CD4-positive, alpha-beta T cell (primary cell): ENCODE measurements at regions of chrX and their contacts with region 1.

Region 1: DNA sequence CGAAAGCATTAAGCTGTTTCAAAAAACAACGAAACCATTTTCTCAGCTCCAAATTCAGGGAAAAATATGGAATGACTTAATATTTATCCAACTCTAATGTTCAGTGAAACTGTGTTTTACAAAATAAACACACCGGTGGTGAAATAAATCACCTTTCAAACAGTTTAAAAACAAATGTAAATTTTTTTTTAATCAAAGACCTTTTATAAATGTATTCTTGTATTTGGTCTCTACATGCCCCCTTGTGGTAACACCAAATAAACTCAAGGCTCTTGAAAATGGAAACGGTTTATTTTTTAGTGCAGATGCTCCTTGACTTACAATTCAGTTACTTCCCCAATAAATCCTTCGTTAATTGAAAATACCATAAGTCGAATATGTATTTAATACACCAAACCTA is 45.8 kb upstream of the ITM2A start:
- DNase-seq: peak in 3 of 14 experiments; percentile 52 to 68 (median 66)
- ATAC-seq: no peak
- H3K4me3 ChIP-seq: peak overlapping the region; percentile 54
- H3K4me3 Mint-ChIP-seq: peak overlapping the region; percentile 87
- H3K27ac ChIP-seq: no peak overlapping the region
- H3K27ac Mint-ChIP-seq: peak overlapping the region; percentile 69
- H3K4me1 ChIP-seq: peaks cover 6% of the 10 kb centered on the region
- H3K4me1 Mint-ChIP-seq: peaks cover 37% of the 10 kb centered on the region
- H3K27me3 ChIP-seq: no peaks in the 10 kb centered on the region
- H3K27me3 Mint-ChIP-seq: no peaks in the 10 kb centered on the region
- CTCF ChIP-seq: peak; percentile 54

Region 2: GRCh38 chrX:78886550-78886949 is 526.4 kb before region 1 on chrX:
- CTCF ChIA-PET with region 1: no interaction called
- POLR2A ChIA-PET with region 1: no interaction called
- intact Hi-C with region 1: loop called in 1 of 2 experiments (anchors 10 kb)
- DNase-seq: peak in 3 of 14 experiments; percentile 28 to 40 (median 36)
- ATAC-seq: peak; percentile 71
- H3K4me3 ChIP-seq: no peak overlapping the region
- H3K4me3 Mint-ChIP-seq: no peak overlapping the region
- H3K27ac ChIP-seq: no peak overlapping the region
- H3K27ac Mint-ChIP-seq: no peak overlapping the region
- H3K4me1 ChIP-seq: no peaks in the 10 kb centered on the region
- H3K4me1 Mint-ChIP-seq: peaks cover 8% of the 10 kb centered on the region
- H3K27me3 ChIP-seq: no peaks in the 10 kb centered on the region
- H3K27me3 Mint-ChIP-seq: no peaks in the 10 kb centered on the region
- CTCF ChIP-seq: peak; percentile 53

Region 3: GRCh38 chrX:79081895-79082512 is 331.0 kb before region 1 on chrX:
- CTCF ChIA-PET with region 1: interaction called, 6 read pairs
- POLR2A ChIA-PET with region 1: no interaction called
- intact Hi-C with region 1: loop called (anchors 5 to 10 kb)
- DNase-seq: peak in 7 of 14 experiments; percentile 8 to 79 (median 51)
- ATAC-seq: peak; percentile 88
- H3K4me3 ChIP-seq: no peak overlapping the region
- H3K4me3 Mint-ChIP-seq: peak overlapping the region; percentile 82
- H3K27ac ChIP-seq: no peak overlapping the region
- H3K27ac Mint-ChIP-seq: peak overlapping the region; percentile 82
- H3K4me1 ChIP-seq: peaks cover 2% of the 10 kb centered on the region
- H3K4me1 Mint-ChIP-seq: peaks cover 33% of the 10 kb centered on the region
- H3K27me3 ChIP-seq: no peaks in the 10 kb centered on the region
- H3K27me3 Mint-ChIP-seq: no peaks in the 10 kb centered on the region
- CTCF ChIP-seq: peak; percentile 43

Region 4: DNA sequence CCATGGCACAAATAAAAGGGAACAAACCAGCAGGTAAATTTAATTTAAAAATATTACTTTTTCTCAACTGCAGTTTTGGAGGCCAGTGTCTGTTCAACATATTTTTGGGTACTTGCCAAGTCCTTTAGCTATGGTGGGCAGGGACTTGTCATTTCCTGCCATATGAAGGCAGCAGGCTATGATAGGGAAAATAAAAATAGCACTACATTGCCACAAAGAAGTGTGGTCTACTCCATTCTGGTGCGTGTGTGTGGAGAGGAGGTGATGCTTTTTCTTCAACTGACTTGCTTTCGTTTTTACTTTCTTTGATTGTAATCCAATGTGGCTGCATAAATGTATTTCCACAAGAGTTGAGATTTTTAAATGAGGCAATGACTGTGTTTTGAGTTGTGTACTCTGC is 251.3 kb before region 1 on chrX:
- CTCF ChIA-PET with region 1: no interaction called
- POLR2A ChIA-PET with region 1: no interaction called
- intact Hi-C with region 1: loop called in 1 of 2 experiments (anchors 5 kb)
- DNase-seq: peak in 8 of 14 experiments; percentile 14 to 92 (median 52)
- ATAC-seq: peak; percentile 88
- H3K4me3 ChIP-seq: peak overlapping the region; percentile 50
- H3K4me3 Mint-ChIP-seq: peak overlapping the region; percentile 94
- H3K27ac ChIP-seq: peak overlapping the region; percentile 74 to 80
- H3K27ac Mint-ChIP-seq: peak overlapping the region; percentile 97
- H3K4me1 ChIP-seq: peaks cover 25% of the 10 kb centered on the region
- H3K4me1 Mint-ChIP-seq: peaks cover 88% of the 10 kb centered on the region
- H3K27me3 ChIP-seq: no peaks in the 10 kb centered on the region
- H3K27me3 Mint-ChIP-seq: no peaks in the 10 kb centered on the region
- CTCF ChIP-seq: no peak

Region 5: DNA sequence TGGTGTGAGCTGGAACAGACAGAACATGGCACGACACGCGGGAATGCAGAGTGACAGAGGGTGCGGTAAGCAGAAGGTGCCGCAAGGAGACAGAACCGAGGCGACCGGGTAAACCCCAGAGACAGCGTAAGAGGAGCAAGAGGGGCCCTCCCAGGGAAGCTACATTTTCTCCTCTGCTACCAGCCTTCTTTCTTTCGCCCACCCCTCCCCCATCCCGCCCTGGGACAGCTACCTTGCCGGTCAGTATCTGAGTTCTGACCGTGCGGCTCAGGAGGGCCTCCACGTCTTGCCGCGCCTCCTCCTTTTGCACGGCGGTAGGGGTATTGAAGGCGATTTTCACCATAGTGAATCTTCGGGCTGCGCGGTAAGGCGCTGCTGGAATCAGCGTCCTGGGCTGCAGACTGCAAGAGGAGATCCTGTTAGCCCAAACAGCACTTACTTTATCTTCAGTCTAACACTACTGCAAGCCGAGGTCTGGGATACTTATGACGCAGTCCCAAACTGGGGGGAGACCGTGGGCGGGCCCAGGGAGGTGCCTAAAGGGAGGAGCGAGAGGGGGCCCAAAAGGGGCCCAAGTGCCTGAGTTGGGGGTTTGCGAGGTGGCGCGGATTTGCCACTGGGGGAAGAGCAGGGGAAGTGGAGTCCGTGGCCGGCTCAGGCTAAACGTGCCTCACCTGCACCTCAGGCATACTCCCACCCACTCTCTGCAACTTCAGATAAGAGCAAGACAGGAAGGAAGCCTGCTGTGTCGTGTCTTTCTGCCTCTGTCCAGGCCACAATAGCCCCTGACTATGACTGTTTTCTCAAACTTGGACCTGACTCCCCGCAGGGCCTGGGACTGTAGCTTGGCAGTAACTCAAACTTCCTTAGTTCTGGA is 45.9 kb before region 1 on chrX and contains the start of gene ITM2A:
- CTCF ChIA-PET with region 1: interaction called, 4 read pairs
- POLR2A ChIA-PET with region 1: interaction called, 16 read pairs
- intact Hi-C with region 1: loop called (anchors 2 to 5 kb)
- DNase-seq: peak; percentile 36 to 85 (median 55)
- ATAC-seq: peak; percentile 86
- H3K4me3 ChIP-seq: peak within 1 kb of the TSS; percentile 86
- H3K4me3 Mint-ChIP-seq: peak within 1 kb of the TSS; percentile 98
- H3K27ac ChIP-seq: peak within 1 kb of the TSS; percentile 77 to 88
- H3K27ac Mint-ChIP-seq: peak within 1 kb of the TSS; percentile 99
- H3K4me1 ChIP-seq: peaks cover 13% of the 10 kb centered on the region
- H3K4me1 Mint-ChIP-seq: peaks cover 27% of the 10 kb centered on the region
- H3K27me3 ChIP-seq: no peaks in the 10 kb centered on the region
- H3K27me3 Mint-ChIP-seq: no peaks in the 10 kb centered on the region
- CTCF ChIP-seq: no peak
- total RNA-seq, gene ITM2A: 236 to 259 TPM